ENCODE measurements at regions of chr17 and their contacts with region 1.

Region 1: GRCh38 chr17:30134551-30134950 is 17.9 kb downstream of the NSRP1 start:
- DNase-seq: no peak
- ATAC-seq: no peak
- H3K4me3 ChIP-seq: no peak overlapping the region
- H3K4me3 Mint-ChIP-seq: no peak overlapping the region
- H3K27ac ChIP-seq: no peak overlapping the region
- H3K27ac Mint-ChIP-seq: peak overlapping the region in 1 of 2 donors; percentile 13
- H3K4me1 ChIP-seq: no peaks in the 10 kb centered on the region
- H3K4me1 Mint-ChIP-seq: peaks cover 12 to 13% of the 10 kb centered on the region in 2 donors
- H3K27me3 ChIP-seq: no peaks in the 10 kb centered on the region
- H3K27me3 Mint-ChIP-seq: no peaks in the 10 kb centered on the region
- CTCF ChIP-seq: no peak

Region 2: GRCh38 chr17:30236766-30237165 is 102.2 kb after region 1 on chr17:
- intact Hi-C with region 1: loop called (anchors 5 kb)
- DNase-seq: no peak
- ATAC-seq: peak in 1 of 3 donors; percentile 38
- H3K4me3 ChIP-seq: no peak overlapping the region
- H3K4me3 Mint-ChIP-seq: peak overlapping the region; percentile 45
- H3K27ac ChIP-seq: no peak overlapping the region
- H3K27ac Mint-ChIP-seq: no peak overlapping the region
- H3K4me1 ChIP-seq: peaks cover 39% of the 10 kb centered on the region
- H3K4me1 Mint-ChIP-seq: peaks cover 13 to 54% of the 10 kb centered on the region in 2 donors
- H3K27me3 ChIP-seq: peaks cover 34% of the 10 kb centered on the region
- H3K27me3 Mint-ChIP-seq: peaks cover 43% of the 10 kb centered on the region in 2 donors
- CTCF ChIP-seq: no peak

Measured in natural killer cell (primary cell).